SK-N-SH (cell line): ENCODE measurements at regions of chr11 and their contacts with region 1.

Region 1: DNA sequence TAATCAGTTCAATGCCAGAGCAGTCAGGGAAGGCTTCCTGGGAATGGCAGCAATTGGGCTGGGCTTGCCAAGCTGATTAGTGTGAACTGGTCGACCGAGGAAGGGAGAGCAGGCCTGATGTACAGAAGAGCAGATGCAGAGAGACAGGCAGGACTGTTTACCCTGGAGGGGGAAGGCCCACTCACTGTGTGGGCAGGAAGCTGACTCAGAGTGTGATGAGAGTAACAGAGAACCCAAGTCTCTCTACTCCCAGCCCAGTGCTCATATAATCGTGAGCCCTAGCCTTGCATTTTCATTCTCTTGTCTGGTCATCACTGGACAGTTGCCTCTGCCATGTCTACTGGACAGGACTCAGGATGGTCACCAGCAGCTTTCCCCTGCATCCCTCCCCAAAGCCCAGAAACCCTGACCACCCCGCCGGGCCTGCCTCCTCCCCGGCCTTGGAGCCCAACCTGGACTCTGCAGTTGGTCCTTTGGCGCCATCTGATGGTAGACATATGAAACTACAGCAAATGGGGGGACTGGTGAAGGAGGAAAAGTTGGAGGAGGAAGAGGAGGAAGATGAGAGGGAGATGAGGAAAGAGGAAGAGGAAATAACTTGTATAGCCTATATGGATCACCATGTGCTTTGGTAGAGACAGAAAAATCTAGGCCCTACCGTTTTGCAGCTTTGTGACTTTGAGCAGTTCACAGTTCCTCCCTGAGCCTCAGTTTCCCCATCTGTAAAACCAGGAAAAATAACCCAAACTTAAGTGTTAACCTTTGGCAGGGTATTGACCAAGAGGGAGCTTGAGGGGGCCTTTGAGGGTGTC is 43.4 kb upstream of the PRDM11 start:
- DNase-seq: peak; percentile 87
- H3K4me3 ChIP-seq: peak overlapping the region in 1 of 2 experiments; percentile 49; a peak in 2 of 4 replicates
- H3K27ac ChIP-seq: peak overlapping the region in 1 of 2 experiments; percentile 26; a peak in 1 of 4 replicates
- H3K4me1 ChIP-seq: peaks cover 0 to 4% of the 10 kb centered on the region in 2 experiments; a peak in 2 of 4 replicates
- H3K27me3 ChIP-seq: peaks cover 21% of the 10 kb centered on the region; the same call in 1 of the 2 replicates
- CTCF ChIP-seq: peak; percentile 98
- EP300 ChIP-seq: no peak; a peak in 1 of 4 replicates
- RAD21 ChIP-seq: peak; percentile 97

Region 2: GRCh38 chr11:44950625-44951476 is 152.2 kb before region 1 on chr11 and contains the start of gene TP53I11:
- CTCF ChIA-PET with region 1: interaction called, 1,245 read pairs
- POLR2A ChIA-PET with region 1: no interaction called
- DNase-seq: peak; percentile 94
- H3K4me3 ChIP-seq: peak within 1 kb of the TSS; percentile 77 to 88
- H3K27ac ChIP-seq: peak within 1 kb of the TSS in 1 of 2 experiments; percentile 43; a peak in 1 of 4 replicates
- H3K4me1 ChIP-seq: peaks cover 4% of the 10 kb centered on the region in 2 experiments; a peak in 2 of 4 replicates
- H3K27me3 ChIP-seq: no peaks in the 10 kb centered on the region
- CTCF ChIP-seq: peak; percentile 67
- EP300 ChIP-seq: no peak
- RAD21 ChIP-seq: no peak
- polyA plus RNA-seq, gene TP53I11: 6.0 and 6.6 TPM in 2 replicates

Region 3: DNA sequence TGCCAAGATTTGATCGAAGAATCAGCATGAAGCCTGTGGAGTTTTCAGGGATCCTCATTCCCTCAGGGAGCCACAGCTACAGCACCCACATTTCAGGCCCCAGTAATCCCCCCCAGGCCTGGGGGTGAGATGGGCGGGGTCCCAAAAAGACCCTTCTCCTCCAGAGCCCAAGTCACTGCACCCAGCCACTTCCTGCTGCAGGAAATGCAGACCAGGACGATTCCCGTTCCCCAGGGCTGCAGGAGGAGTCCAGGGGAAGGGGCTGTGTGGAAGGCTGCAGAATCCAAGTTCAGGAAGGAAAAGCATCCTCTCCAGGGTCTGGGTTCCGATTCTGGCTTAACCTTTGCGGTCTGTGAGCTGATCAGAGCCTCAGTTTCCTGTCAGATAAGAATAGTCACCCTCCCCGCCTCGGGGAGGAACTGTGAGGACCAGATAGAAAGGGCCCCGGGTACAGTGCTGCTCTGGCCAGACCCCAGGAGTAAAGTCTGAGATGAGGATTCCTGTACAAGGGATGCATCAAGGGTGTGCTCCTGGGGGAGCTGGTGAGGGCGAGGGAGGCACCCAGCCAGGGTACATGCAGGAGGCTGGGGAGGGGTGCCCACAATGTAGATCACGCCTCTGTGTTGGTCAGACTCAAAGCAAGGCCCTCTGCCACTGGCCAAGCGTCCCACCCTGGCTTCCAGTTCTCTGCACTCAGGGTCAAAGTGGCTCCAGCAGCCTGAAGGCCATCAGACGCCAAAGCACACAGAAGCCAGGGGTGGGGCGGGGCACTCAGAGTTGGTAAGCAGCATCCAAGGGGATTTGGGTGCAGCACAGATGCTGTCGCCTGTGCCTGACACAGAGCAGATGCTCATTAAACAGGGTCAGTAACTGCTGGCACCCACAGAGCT is 122.2 kb before region 1 on chr11:
- CTCF ChIA-PET with region 1: interaction called, 15 read pairs
- POLR2A ChIA-PET with region 1: no interaction called
- DNase-seq: no peak
- H3K4me3 ChIP-seq: no peak overlapping the region
- H3K27ac ChIP-seq: no peak overlapping the region
- H3K4me1 ChIP-seq: peaks cover 5 to 16% of the 10 kb centered on the region in 2 experiments; a peak in 2 of 4 replicates
- H3K27me3 ChIP-seq: peaks cover 3% of the 10 kb centered on the region; the same call in 1 of the 2 replicates
- CTCF ChIP-seq: no peak
- EP300 ChIP-seq: no peak
- RAD21 ChIP-seq: no peak

Region 4: DNA sequence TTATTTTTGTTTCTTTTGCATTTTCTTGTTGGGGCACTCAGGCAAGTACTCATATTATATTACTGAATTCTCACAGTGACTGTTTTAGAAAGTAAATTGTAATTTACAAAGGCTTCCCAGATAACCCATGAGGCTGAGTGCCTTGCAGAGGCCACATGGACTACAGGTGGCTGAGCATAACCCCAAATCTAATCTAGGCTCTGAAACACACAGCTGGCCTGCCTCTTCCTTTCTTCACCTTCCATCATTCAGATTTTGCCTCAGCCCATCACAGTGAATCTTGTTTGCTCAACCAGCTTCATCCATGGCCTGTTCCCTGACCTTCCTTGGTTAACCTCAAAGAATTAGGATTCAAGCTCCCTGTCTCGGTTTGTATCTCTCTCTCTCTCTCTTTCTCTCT is 35.0 kb before region 1 on chr11:
- CTCF ChIA-PET with region 1: interaction called, 15 read pairs
- POLR2A ChIA-PET with region 1: no interaction called
- DNase-seq: no peak
- H3K4me3 ChIP-seq: no peak overlapping the region
- H3K27ac ChIP-seq: no peak overlapping the region
- H3K4me1 ChIP-seq: no peaks in the 10 kb centered on the region
- H3K27me3 ChIP-seq: no peaks in the 10 kb centered on the region; the same call in 1 of the 2 replicates
- CTCF ChIP-seq: no peak
- EP300 ChIP-seq: no peak
- RAD21 ChIP-seq: no peak

Region 5: DNA sequence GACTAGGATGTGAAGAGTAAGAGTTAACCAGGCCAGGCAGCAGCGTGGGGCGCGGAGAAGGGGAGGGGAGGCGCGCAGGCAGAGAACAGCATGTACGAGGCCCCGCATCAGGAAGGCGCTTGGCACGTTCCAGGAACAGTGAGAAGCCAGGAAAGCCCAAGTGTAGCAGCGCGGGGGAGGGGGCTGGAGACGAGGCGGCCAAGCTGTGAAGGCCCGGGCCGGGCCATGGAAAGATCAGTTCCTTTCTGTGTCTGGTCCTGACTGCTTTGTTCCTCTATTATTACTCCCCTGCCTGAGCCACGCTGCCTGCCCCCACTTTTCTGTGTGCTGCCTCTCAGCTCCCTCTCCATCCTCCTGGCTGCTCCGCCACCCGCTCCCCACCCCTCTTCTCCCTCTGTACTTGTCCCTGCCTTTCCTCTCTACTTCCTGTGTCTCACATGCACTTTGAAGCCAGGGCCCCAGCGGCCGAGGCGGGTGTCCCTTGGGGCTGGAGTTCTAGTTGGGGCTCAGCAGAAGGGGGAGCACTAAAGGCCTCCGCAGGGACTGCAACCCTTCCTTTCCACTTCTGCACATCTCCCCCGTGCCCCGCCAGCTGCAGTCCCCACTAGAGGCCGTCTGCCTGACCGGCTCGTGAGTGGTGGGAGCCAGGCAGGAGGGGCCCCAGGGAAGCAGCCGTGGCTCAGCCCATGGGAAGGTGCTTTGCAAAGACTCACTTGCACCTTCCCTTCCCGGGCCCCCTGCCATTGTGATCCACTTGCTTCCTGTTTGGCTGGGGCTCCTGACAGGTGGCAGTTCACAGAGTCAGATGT is 107.1 kb after region 1 on chr11:
- CTCF ChIA-PET with region 1: no interaction called
- POLR2A ChIA-PET with region 1: no interaction called
- DNase-seq: peak; percentile 46
- H3K4me3 ChIP-seq: no peak overlapping the region
- H3K27ac ChIP-seq: no peak overlapping the region
- H3K4me1 ChIP-seq: no peaks in the 10 kb centered on the region; a peak in 2 of 4 replicates
- H3K27me3 ChIP-seq: no peaks in the 10 kb centered on the region
- CTCF ChIP-seq: no peak
- EP300 ChIP-seq: no peak
- RAD21 ChIP-seq: no peak

Region 6: DNA sequence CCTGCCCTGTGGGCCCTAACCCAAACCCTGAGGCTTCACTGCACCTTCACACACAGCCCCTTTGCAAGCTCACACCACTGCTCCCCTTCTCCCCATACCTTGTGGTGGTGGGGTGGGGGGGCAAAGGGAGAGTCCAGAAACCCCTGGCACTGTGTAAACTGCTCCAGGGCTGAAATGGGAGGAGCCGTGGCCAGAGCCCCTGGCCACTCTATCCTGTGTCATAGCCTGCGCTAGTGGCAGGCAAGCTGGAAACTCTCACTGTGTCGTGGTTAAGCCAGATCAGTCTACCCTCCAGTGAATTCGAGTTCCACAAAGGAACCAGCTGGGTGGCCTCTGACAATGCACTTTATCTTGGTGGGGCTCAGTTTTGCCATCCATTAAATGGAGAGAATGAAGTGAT is 191.5 kb after region 1 on chr11:
- CTCF ChIA-PET with region 1: interaction called, 188 read pairs
- POLR2A ChIA-PET with region 1: no interaction called
- DNase-seq: no peak
- H3K4me3 ChIP-seq: no peak overlapping the region
- H3K27ac ChIP-seq: no peak overlapping the region
- H3K4me1 ChIP-seq: no peaks in the 10 kb centered on the region
- H3K27me3 ChIP-seq: peaks cover 9% of the 10 kb centered on the region
- CTCF ChIP-seq: no peak
- EP300 ChIP-seq: no peak
- RAD21 ChIP-seq: no peak